Naive thymus-derived CD4-positive, alpha-beta T cell (primary cell): ENCODE measurements at regions of chr1 and their contacts with region 1.

Region 1: GRCh38 chr1:28950449-28950848 is 36.1 kb downstream of the EPB41 start:
- DNase-seq: no peak
- ATAC-seq: no peak
- H3K4me3 ChIP-seq: no peak overlapping the region
- H3K4me3 Mint-ChIP-seq: peak overlapping the region in 1 of 10 donors; percentile 46
- H3K27ac ChIP-seq: no peak overlapping the region
- H3K27ac Mint-ChIP-seq: peak overlapping the region in 3 of 9 donors; percentile 1 to 77 (median 49)
- H3K4me1 ChIP-seq: peaks cover 4 to 8% of the 10 kb centered on the region in 2 donors
- H3K4me1 Mint-ChIP-seq: peaks cover 11 to 87% (median 63%) of the 10 kb centered on the region in 7 donors
- H3K27me3 ChIP-seq: no peaks in the 10 kb centered on the region
- H3K27me3 Mint-ChIP-seq: no peaks in the 10 kb centered on the region

Region 2: DNA sequence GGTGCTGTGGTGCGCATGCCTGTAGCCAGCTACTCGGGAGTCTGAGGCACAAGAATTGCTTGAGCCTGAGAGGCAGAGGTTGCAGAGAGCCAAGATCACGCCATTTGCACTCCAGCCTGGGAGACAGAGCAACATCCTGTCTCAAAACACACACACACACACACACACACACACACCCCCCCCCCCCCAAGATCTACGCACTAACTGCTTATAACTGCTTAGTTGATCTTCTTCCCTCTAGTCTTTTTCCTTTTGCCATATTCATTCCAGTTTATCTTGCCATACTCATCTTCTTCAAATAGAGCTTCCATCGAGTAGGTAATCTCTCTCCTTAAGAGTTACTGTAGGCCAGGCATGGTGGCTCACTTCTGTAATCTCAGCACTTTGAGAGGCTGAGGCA is 15.2 kb before region 1 on chr1:
- CTCF ChIA-PET with region 1: interaction called, 4 read pairs
- POLR2A ChIA-PET with region 1: interaction called, 4 read pairs
- intact Hi-C with region 1: loop called in 1 of 2 experiments (anchors 2 kb)
- DNase-seq: no peak
- ATAC-seq: no peak
- H3K4me3 ChIP-seq: no peak overlapping the region
- H3K4me3 Mint-ChIP-seq: peak overlapping the region in 9 of 10 donors; percentile 14 to 86 (median 69)
- H3K27ac ChIP-seq: no peak overlapping the region
- H3K27ac Mint-ChIP-seq: peak overlapping the region in 8 of 9 donors; percentile 0 to 79 (median 70)
- H3K4me1 ChIP-seq: peaks cover 52 to 61% of the 10 kb centered on the region in 2 donors
- H3K4me1 Mint-ChIP-seq: peaks cover 43 to 91% (median 80%) of the 10 kb centered on the region in 7 donors
- H3K27me3 ChIP-seq: no peaks in the 10 kb centered on the region
- H3K27me3 Mint-ChIP-seq: no peaks in the 10 kb centered on the region

Region 3: DNA sequence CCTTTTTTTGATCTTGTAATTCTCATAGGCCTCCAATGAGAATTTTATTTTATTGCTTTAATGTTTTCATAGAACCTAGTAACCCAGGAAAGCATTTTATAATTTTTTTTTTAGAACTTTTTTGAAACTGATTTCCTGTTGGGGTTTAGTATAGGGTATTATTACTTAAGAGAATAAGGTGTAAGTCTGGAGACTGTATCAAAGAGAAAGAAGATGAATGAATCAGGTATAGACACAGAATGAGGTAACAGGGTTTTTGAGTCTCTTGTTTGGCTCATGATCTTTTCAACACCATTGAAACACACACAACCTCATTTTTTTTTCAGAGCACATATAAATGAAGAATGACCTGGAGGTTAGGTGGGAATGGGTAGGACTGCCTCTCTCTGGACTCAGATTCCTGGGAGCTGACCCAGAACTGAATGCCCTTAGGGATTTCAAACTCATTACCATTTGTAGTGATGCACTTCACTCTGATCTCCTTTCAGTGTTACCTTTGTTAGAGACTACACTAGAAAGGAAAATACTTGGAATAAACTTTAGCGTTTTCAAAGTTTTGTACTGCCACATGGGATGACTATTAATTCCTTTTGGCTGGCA is 14.9 kb after region 1 on chr1:
- CTCF ChIA-PET with region 1: no interaction called
- POLR2A ChIA-PET with region 1: interaction called, 3 read pairs
- intact Hi-C with region 1: loop called in 1 of 2 experiments (anchors 2 kb)
- DNase-seq: peak in 6 of 9 donors; percentile 12 to 49 (median 32)
- ATAC-seq: peak; percentile 80
- H3K4me3 ChIP-seq: no peak overlapping the region
- H3K4me3 Mint-ChIP-seq: peak overlapping the region in 8 of 10 donors; percentile 14 to 73 (median 34)
- H3K27ac ChIP-seq: peak overlapping the region; percentile 25
- H3K27ac Mint-ChIP-seq: peak overlapping the region in 8 of 9 donors; percentile 5 to 85 (median 70)
- H3K4me1 ChIP-seq: peaks cover 9 to 17% of the 10 kb centered on the region in 2 donors
- H3K4me1 Mint-ChIP-seq: peaks cover 23 to 85% (median 66%) of the 10 kb centered on the region in 7 donors
- H3K27me3 ChIP-seq: no peaks in the 10 kb centered on the region
- H3K27me3 Mint-ChIP-seq: no peaks in the 10 kb centered on the region